GM13977 (cell line): ENCODE measurements at regions of chr6 and their contacts with region 1.

Region 1: GRCh38 chr6:11653028-11653583 is 115.6 kb downstream of the TMEM170B start:
- DNase-seq: peak; percentile 63
- CTCF ChIP-seq: no peak

Region 2: GRCh38 chr6:12289933-12290820 is 637.1 kb after region 1 on chr6 and contains the start of gene EDN1:
- in situ Hi-C with region 1: loop called (anchors 25 kb)
- DNase-seq: peak; percentile 75
- CTCF ChIP-seq: peak; percentile 62

Region 3: DNA sequence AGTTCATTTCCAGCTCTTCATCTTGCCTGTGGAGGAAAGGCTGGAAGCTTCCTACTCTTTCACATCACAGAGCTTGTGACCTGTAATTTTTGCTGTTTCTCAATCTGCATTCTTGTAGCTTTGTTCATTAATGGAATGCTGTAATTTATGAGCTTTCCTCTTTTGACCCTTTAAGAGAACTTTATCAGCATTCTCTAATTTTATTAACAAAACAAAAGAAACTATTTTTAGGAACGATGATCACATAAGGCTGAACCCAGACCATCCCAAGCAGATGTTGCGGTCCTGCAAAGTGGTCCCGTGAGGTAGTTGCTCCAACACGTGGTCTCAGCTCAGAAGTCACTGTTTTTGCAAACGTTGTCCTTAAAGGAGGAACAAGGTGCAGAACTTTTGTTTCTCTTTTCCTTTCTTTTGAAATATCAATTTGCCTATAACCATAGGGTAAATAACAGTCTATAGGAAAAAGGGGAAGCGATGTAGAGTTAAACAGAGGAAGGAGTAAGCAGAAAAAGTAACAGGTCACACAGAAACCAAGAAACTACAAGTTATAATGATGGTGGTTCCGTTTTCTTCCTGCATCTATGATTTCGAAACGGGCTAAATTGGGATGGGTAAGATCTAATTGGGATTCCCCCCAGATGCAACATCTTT is 942.2 kb after region 1 on chr6:
- in situ Hi-C with region 1: loop called (anchors 25 kb)
- DNase-seq: no peak
- CTCF ChIP-seq: no peak